ENCODE measurements at regions of chr17 and their contacts with region 1.

Region 1: DNA sequence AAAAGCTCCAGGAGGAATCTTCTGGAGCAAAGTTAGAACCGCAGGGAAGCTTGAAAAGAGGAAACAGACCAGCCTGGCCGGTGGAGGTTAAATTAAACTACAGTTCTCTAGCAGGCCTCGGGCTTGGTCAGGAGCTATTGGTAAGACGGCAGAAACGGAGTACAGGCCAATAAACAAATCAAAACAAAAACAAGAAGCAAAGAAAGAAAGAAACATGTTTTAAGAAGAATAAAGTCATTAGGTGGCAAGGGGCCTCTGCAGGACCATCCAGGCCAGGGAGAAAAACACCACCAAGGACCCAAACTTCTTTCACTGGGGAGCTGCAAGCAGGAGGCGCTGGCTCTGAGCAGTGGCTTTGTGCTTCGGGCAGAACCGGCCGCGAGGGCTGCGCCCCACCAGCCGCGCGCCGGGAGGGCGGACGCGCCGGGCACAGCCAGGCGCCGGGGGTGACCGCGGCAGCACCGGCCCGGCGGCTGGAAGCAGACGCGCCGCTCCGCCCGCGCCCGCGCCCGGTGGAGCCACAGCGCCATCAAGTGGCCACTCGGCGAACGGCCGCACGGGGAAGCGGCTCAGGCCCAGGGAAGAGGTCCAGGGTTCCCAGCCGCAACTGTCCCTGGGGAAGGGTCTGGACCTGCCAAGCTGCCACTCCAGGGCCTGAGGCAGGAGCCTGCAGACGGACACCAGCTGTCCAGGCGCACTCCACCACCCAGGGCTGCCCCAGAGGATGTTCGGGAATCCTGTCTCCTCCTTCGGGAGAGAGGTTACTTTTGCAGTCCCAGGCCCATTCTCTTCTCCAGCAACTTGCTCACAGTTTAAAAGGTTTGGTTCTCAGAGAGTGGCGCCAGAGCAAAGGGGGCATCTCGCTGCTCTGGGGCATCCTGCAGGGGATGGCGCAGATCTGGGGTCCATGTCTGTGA is 419.4 kb downstream of the SOX9 start:
- DNase-seq: peak; percentile 82
- ATAC-seq: peak; percentile 83
- H3K4me3 Mint-ChIP-seq: peak overlapping the region; percentile 64
- H3K27ac Mint-ChIP-seq: peak overlapping the region; percentile 91
- H3K4me1 Mint-ChIP-seq: peaks cover 19% of the 10 kb centered on the region
- H3K27me3 Mint-ChIP-seq: no peaks in the 10 kb centered on the region; the same call in none of the 2 replicates
- CTCF ChIP-seq: peak; percentile 88

Region 2: DNA sequence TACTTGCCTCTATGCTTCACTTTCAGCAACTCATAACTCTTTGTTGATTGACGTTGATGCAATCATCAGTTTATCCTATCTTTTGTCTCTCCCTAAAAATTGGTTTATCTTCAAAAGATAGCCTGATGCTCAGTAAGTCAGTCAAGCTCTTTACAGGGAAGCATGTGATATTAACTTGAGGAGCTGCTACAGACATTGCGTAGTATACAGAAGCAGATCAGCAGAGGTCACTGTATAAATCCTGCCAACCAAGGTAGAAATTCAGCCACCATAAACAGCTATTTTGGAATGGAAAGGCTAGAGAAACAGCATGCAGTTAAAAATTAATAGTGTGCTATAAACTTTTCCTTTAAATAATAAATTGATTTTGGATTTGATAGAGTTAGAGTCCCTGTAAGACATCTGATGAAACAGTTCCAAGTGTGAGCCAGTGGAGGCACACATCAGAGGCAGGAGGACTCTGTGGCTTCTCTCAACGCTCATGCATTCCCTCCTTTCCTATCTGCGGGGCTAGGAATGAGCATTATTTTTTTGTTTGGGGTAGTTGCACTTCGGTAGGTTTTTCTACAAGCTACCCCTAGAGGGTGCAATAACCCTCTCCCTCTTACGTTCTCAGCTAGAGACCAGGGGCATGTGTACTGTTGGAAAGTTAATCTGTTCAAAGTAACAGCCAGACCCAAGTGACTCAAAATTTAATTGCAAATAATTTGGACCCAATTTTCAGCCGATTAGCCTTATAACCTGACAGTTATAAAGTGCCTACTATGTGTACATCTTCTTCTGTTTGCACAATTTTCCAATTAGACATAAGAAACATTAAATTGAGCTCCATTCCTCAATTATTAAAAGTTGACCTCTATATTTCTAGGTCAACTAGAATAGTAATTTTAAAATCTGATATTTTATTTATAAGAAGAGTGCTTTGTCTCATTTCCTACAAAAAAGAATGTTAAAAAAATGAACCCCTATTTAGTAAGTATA is 1067.1 kb before region 1 on chr17:
- CTCF ChIA-PET with region 1: interaction called, 12 read pairs
- POLR2A ChIA-PET with region 1: no interaction called
- DNase-seq: peak; percentile 11
- ATAC-seq: peak; percentile 95
- H3K4me3 Mint-ChIP-seq: no peak overlapping the region
- H3K27ac Mint-ChIP-seq: no peak overlapping the region
- H3K4me1 Mint-ChIP-seq: peaks cover 6% of the 10 kb centered on the region; the same call in 1 of the 2 replicates
- H3K27me3 Mint-ChIP-seq: no peaks in the 10 kb centered on the region
- CTCF ChIP-seq: peak; percentile 66

Region 3: GRCh38 chr17:72120642-72121163 is 419.5 kb before region 1 on chr17 and contains the start of gene SOX9:
- CTCF ChIA-PET with region 1: interaction called, 17 read pairs
- POLR2A ChIA-PET with region 1: interaction called, 10 read pairs
- DNase-seq: peak; percentile 89
- ATAC-seq: peak; percentile 75
- H3K4me3 Mint-ChIP-seq: peak within 1 kb of the TSS; percentile 95
- H3K27ac Mint-ChIP-seq: no peak within 1 kb of the TSS
- H3K4me1 Mint-ChIP-seq: peaks cover 51% of the 10 kb centered on the region
- H3K27me3 Mint-ChIP-seq: peaks cover 59% of the 10 kb centered on the region
- CTCF ChIP-seq: no peak
- total RNA-seq, gene SOX9: 8.1 to 9.0 TPM (median 8.9 TPM) in 3 replicates

Region 4: DNA sequence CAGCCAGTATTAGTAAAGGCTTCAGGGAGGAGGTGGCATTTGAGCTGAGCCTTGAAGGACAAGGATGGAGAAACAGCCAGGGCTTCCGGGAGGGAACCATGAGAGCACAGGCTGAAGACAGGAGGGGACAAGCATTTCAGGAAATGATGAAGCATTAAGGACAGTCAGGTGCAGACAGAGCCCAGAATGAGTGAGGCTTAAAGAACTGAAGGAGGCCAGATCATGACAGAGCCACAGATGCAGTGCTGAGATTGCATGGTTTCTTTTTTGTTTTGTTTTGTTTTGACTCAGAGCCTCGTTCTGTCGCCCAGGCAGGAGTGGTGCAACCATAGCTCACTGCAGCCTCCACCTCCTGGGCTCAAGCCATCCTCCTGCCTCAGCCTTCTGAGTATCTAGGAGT is 207.9 kb before region 1 on chr17:
- CTCF ChIA-PET with region 1: no interaction called
- POLR2A ChIA-PET with region 1: no interaction called
- DNase-seq: no peak
- ATAC-seq: no peak
- H3K4me3 Mint-ChIP-seq: no peak overlapping the region
- H3K27ac Mint-ChIP-seq: no peak overlapping the region
- H3K4me1 Mint-ChIP-seq: peaks cover 15% of the 10 kb centered on the region
- H3K27me3 Mint-ChIP-seq: 0 out of 2 replicates have a peak, but pooled peaks cover 2% of the 10 kb centered on the region
- CTCF ChIP-seq: no peak

Measured in WTC11 (cell line).